Activated B cell treated with CpG ODN at 0.5 μM for 24 hours (primary cell): ENCODE measurements at regions of chr4 and their contacts with region 1.

Region 1: GRCh38 chr4:120049732-120050494 is 16.7 kb downstream of the MAD2L1 start:
- DNase-seq: peak; percentile 30
- ATAC-seq: peak; percentile 93
- H3K4me3 Mint-ChIP-seq: peak overlapping the region; percentile 59
- H3K27ac Mint-ChIP-seq: no peak overlapping the region
- H3K4me1 Mint-ChIP-seq: peaks cover 12% of the 10 kb centered on the region
- H3K27me3 Mint-ChIP-seq: no peaks in the 10 kb centered on the region
- CTCF ChIP-seq: peak; percentile 91

Region 2: DNA sequence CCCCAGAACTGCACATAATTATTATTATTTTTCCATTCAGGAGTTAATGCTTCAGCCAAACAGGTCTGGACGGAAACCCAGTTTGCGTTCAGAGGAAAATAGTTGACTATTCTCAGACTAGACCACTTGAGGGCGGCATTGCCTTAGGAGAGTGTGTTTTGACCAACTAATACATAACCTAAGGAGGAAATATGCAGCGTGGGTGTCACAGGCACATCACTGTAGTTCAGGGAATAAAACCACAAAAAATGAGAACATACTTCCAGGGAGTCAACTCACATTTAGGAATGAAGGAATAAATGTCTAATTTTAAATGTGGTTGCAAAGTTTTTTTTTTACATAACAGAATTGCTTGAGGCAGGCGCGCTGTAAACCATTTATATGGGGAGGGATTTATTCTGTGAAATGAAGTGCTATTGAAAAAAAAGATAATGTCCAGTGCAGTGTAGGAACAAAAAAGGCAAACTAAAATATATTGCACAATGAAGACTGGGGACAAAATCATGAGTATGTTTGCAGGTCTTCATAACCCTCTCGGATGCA is 1068.0 kb before region 1 on chr4:
- CTCF ChIA-PET with region 1: interaction called, 3 read pairs
- POLR2A ChIA-PET with region 1: no interaction called
- intact Hi-C with region 1: loop called (anchors 1 kb)
- DNase-seq: no peak
- ATAC-seq: peak; percentile 57
- H3K4me3 Mint-ChIP-seq: no peak overlapping the region
- H3K27ac Mint-ChIP-seq: no peak overlapping the region
- H3K4me1 Mint-ChIP-seq: no peaks in the 10 kb centered on the region
- H3K27me3 Mint-ChIP-seq: peaks cover 4% of the 10 kb centered on the region
- CTCF ChIP-seq: no peak

Region 3: GRCh38 chr4:119041951-119042560 is 1007.9 kb before region 1 on chr4:
- CTCF ChIA-PET with region 1: no interaction called
- POLR2A ChIA-PET with region 1: no interaction called
- intact Hi-C with region 1: loop called (anchors 5 kb)
- DNase-seq: no peak
- ATAC-seq: peak; percentile 83
- H3K4me3 Mint-ChIP-seq: no peak overlapping the region
- H3K27ac Mint-ChIP-seq: no peak overlapping the region
- H3K4me1 Mint-ChIP-seq: peaks cover 5% of the 10 kb centered on the region
- H3K27me3 Mint-ChIP-seq: no peaks in the 10 kb centered on the region
- CTCF ChIP-seq: no peak

Region 4: GRCh38 chr4:119314356-119314755 is 735.6 kb before region 1 on chr4:
- CTCF ChIA-PET with region 1: interaction called, 4 read pairs
- POLR2A ChIA-PET with region 1: no interaction called
- intact Hi-C with region 1: loop called (anchors 1 kb)
- DNase-seq: no peak
- ATAC-seq: peak; percentile 57
- H3K4me3 Mint-ChIP-seq: no peak overlapping the region
- H3K27ac Mint-ChIP-seq: no peak overlapping the region
- H3K4me1 Mint-ChIP-seq: no peaks in the 10 kb centered on the region
- H3K27me3 Mint-ChIP-seq: peaks cover 8% of the 10 kb centered on the region
- CTCF ChIP-seq: no peak

Region 5: DNA sequence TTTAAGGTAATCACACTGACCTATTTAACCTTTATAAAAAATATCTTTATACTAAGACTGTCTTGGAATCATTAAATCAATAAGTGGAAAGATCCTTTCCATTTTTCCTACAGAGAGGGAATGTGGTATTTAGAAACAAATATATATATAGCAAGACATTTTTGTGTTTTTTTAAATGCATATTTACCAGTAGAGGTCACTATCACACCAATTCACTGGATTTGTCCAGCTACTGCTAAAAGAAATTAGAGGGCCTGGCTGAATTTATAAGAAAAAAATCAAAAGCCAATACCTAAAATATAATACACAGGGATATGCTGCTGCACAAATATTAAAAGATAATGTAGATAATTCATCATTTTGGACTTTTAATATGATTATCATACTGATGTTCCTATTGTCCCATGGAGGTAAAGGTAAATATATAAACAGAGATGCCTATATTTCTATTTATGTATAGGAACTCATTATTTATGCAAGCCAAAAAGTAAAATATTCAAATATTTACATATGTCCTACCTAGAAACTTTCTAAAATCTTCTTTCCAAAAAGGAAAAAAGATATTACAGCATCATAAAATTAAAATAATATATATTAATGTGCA is 490.8 kb before region 1 on chr4:
- CTCF ChIA-PET with region 1: interaction called, 3 read pairs
- POLR2A ChIA-PET with region 1: no interaction called
- intact Hi-C with region 1: loop called (anchors 1 kb)
- DNase-seq: no peak
- ATAC-seq: no peak
- H3K4me3 Mint-ChIP-seq: no peak overlapping the region
- H3K27ac Mint-ChIP-seq: no peak overlapping the region
- H3K4me1 Mint-ChIP-seq: no peaks in the 10 kb centered on the region
- H3K27me3 Mint-ChIP-seq: no peaks in the 10 kb centered on the region
- CTCF ChIP-seq: no peak

Region 6: GRCh38 chr4:119765936-119766335 is 284.0 kb before region 1 on chr4:
- CTCF ChIA-PET with region 1: no interaction called
- POLR2A ChIA-PET with region 1: no interaction called
- intact Hi-C with region 1: no loop called
- DNase-seq: no peak
- ATAC-seq: no peak
- H3K4me3 Mint-ChIP-seq: no peak overlapping the region
- H3K27ac Mint-ChIP-seq: no peak overlapping the region
- H3K4me1 Mint-ChIP-seq: no peaks in the 10 kb centered on the region
- H3K27me3 Mint-ChIP-seq: no peaks in the 10 kb centered on the region
- CTCF ChIP-seq: no peak